ENCODE measurements at regions of chr4 and their contacts with region 1.

Region 1: GRCh38 chr4:176150356-176150682 is 45.1 kb downstream of the SPATA4 start:
- DNase-seq: no peak
- H3K4me3 ChIP-seq: no peak overlapping the region
- H3K27ac ChIP-seq: no peak overlapping the region
- H3K4me1 ChIP-seq: no peaks in the 10 kb centered on the region
- H3K27me3 ChIP-seq: no peaks in the 10 kb centered on the region
- CTCF ChIP-seq: no peak

Region 2: GRCh38 chr4:176277162-176277904 is 127.0 kb after region 1 on chr4:
- intact Hi-C with region 1: loop called (anchors 5 kb)
- DNase-seq: peak; percentile 34
- H3K4me3 ChIP-seq: no peak overlapping the region
- H3K27ac ChIP-seq: no peak overlapping the region
- H3K4me1 ChIP-seq: no peaks in the 10 kb centered on the region
- H3K27me3 ChIP-seq: no peaks in the 10 kb centered on the region
- CTCF ChIP-seq: no peak

Region 3: DNA sequence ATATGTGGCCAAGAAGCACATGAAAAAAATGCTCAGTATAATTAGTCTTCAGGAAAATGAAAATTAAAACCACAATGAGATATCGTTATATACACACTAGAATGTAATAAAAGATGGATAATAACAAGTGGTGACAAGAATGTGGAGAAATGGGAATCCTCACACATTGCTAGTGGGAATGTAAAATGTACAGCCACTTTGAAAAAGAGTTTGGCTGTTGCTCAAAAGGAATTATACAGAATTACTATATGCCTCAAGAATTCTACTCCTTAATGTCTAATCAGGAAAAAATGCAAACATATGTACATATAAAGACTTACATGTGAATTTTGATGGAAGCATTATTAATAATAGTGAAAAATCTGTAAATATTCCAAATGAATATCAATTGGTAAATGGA is 271.7 kb after region 1 on chr4:
- intact Hi-C with region 1: no loop called
- DNase-seq: no peak
- H3K4me3 ChIP-seq: no peak overlapping the region
- H3K27ac ChIP-seq: no peak overlapping the region
- H3K4me1 ChIP-seq: no peaks in the 10 kb centered on the region
- H3K27me3 ChIP-seq: no peaks in the 10 kb centered on the region
- CTCF ChIP-seq: no peak

Measured in colonic mucosa (tissue), 4 donors.